HepG2 (cell line): ENCODE measurements at regions of chr3 and their contacts with region 1.

Region 1: GRCh38 chr3:158434412-158435038 is 136.5 kb upstream of the MLF1 start:
- DNase-seq: peak; percentile 78
- ATAC-seq: peak; percentile 99
- H3K4me3 ChIP-seq: no peak overlapping the region
- H3K27ac ChIP-seq: no peak overlapping the region
- H3K4me1 ChIP-seq: peaks cover 10% of the 10 kb centered on the region
- H3K27me3 ChIP-seq: no peaks in the 10 kb centered on the region
- CTCF ChIP-seq: peak; percentile 83
- EP300 ChIP-seq: no peak
- POLR2A ChIP-seq: no peak
- RAD21 ChIP-seq: peak; percentile 73

Region 2: GRCh38 chr3:157618075-157618760 is 816.3 kb before region 1 on chr3:
- CTCF ChIA-PET with region 1: interaction called, 12 read pairs
- POLR2A ChIA-PET with region 1: no interaction called
- in situ Hi-C with region 1: loop called (anchors 10 kb)
- intact Hi-C with region 1: no loop called
- DNase-seq: peak; percentile 41
- ATAC-seq: peak; percentile 46; the same call in 2 of the 3 replicates
- H3K4me3 ChIP-seq: no peak overlapping the region
- H3K27ac ChIP-seq: no peak overlapping the region
- H3K4me1 ChIP-seq: no peaks in the 10 kb centered on the region
- H3K27me3 ChIP-seq: no peaks in the 10 kb centered on the region; a peak in 2 of 5 replicates
- CTCF ChIP-seq: peak; percentile 63
- EP300 ChIP-seq: no peak
- POLR2A ChIP-seq: no peak
- RAD21 ChIP-seq: no peak

Region 3: GRCh38 chr3:158091531-158091930 is 343.0 kb before region 1 on chr3:
- CTCF ChIA-PET with region 1: interaction called, 5 read pairs
- POLR2A ChIA-PET with region 1: no interaction called
- in situ Hi-C with region 1: loop called (anchors 10 kb)
- intact Hi-C with region 1: loop called (anchors 1 kb)
- DNase-seq: peak; percentile 15
- ATAC-seq: peak; percentile 75
- H3K4me3 ChIP-seq: no peak overlapping the region
- H3K27ac ChIP-seq: no peak overlapping the region
- H3K4me1 ChIP-seq: no peaks in the 10 kb centered on the region
- H3K27me3 ChIP-seq: peaks cover under 1 to 11% of the 10 kb centered on the region in 2 experiments; a peak in 2 of 5 replicates
- CTCF ChIP-seq: peak; percentile 60
- EP300 ChIP-seq: no peak
- POLR2A ChIP-seq: no peak
- RAD21 ChIP-seq: no peak

Region 4: GRCh38 chr3:158261371-158261979 is 173.1 kb before region 1 on chr3:
- CTCF ChIA-PET with region 1: no interaction called
- POLR2A ChIA-PET with region 1: no interaction called
- in situ Hi-C with region 1: no loop called
- intact Hi-C with region 1: loop called (anchors 1 kb)
- DNase-seq: no peak
- ATAC-seq: no peak
- H3K4me3 ChIP-seq: no peak overlapping the region
- H3K27ac ChIP-seq: no peak overlapping the region
- H3K4me1 ChIP-seq: no peaks in the 10 kb centered on the region
- H3K27me3 ChIP-seq: no peaks in the 10 kb centered on the region
- CTCF ChIP-seq: peak; percentile 20; the same call in 1 of the 2 replicates
- EP300 ChIP-seq: no peak
- POLR2A ChIP-seq: no peak
- RAD21 ChIP-seq: no peak

Region 5: DNA sequence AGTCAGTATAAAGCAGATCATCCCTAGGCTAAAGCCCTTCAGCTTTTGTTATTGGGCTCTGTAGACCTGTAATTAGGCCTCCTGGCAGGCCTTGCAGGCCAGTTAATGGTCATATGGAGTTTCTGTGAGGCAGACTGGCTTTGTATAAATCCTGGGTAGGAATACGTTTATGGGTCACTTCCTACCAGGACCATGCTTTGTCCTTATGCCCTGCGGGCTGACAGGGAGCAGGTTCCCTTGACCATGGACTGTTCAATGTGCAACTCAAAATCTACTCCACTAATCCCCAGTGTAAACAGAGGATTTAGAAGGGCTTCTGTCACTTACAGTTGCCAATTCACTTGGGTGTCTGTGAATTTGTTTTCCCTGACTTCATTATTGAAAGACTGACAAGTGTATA is 66.3 kb before region 1 on chr3:
- CTCF ChIA-PET with region 1: no interaction called
- POLR2A ChIA-PET with region 1: no interaction called
- in situ Hi-C with region 1: no loop called
- intact Hi-C with region 1: no loop called
- DNase-seq: peak; percentile 91
- ATAC-seq: peak; percentile 100
- H3K4me3 ChIP-seq: peak overlapping the region in 1 of 3 experiments; percentile 24; a peak in 1 of 6 replicates
- H3K27ac ChIP-seq: peak overlapping the region; percentile 67
- H3K4me1 ChIP-seq: peaks cover 15% of the 10 kb centered on the region
- H3K27me3 ChIP-seq: no peaks in the 10 kb centered on the region
- CTCF ChIP-seq: no peak
- EP300 ChIP-seq: peak; percentile 73 to 94; a peak in 3 of 4 replicates
- POLR2A ChIP-seq: peak in 1 of 2 experiments; percentile 37; a peak in 1 of 4 replicates
- RAD21 ChIP-seq: no peak

Region 6: GRCh38 chr3:158532099-158532734 is 97.7 kb after region 1 on chr3:
- CTCF ChIA-PET with region 1: no interaction called
- POLR2A ChIA-PET with region 1: no interaction called
- in situ Hi-C with region 1: no loop called
- intact Hi-C with region 1: loop called (anchors 1 kb)
- DNase-seq: peak; percentile 44
- ATAC-seq: no peak
- H3K4me3 ChIP-seq: no peak overlapping the region
- H3K27ac ChIP-seq: no peak overlapping the region
- H3K4me1 ChIP-seq: no peaks in the 10 kb centered on the region
- H3K27me3 ChIP-seq: no peaks in the 10 kb centered on the region
- CTCF ChIP-seq: peak; percentile 48
- EP300 ChIP-seq: no peak
- POLR2A ChIP-seq: no peak
- RAD21 ChIP-seq: no peak

Region 7: GRCh38 chr3:159804726-159805410 is 1370.3 kb after region 1 on chr3:
- CTCF ChIA-PET with region 1: no interaction called
- POLR2A ChIA-PET with region 1: no interaction called
- in situ Hi-C with region 1: no loop called
- intact Hi-C with region 1: no loop called
- DNase-seq: peak; percentile 73
- ATAC-seq: peak; percentile 99
- H3K4me3 ChIP-seq: no peak overlapping the region
- H3K27ac ChIP-seq: no peak overlapping the region
- H3K4me1 ChIP-seq: peaks cover 7% of the 10 kb centered on the region; the same call in 1 of the 2 replicates
- H3K27me3 ChIP-seq: no peaks in the 10 kb centered on the region
- CTCF ChIP-seq: peak; percentile 94
- EP300 ChIP-seq: no peak
- POLR2A ChIP-seq: no peak
- RAD21 ChIP-seq: peak; percentile 91